ENCODE measurements at regions of chr13 and their contacts with region 1.

Region 1: DNA sequence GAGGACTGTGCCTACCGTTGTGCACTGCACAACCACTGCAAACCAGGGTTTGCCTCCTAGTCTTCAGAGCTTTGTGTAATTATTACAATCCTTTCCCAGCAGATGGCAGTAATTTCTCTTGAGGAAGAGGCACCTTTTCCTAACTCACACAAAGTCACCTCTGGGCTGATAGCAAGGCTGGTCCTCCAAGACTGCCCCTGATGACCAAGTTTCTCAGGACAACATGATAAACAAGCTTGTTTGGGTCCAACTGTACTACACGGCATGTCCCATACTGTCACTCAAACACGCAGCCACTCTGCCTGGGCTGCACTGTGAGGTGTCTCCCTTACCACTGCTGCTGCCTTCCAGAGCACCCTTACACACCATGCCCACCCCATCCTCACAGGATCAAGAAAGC is 39.3 kb downstream of the RFXAP start:
- DNase-seq: no peak
- ATAC-seq: peak; percentile 51

Region 2: GRCh38 chr13:36981156-36981743 is 123.0 kb after region 1 on chr13:
- intact Hi-C with region 1: loop called (anchors 5 kb)
- DNase-seq: no peak
- ATAC-seq: no peak

Measured in Right ventricle myocardium superior (tissue), 1 donor.